Caco-2 (cell line): ENCODE measurements at regions of chr6 and their contacts with region 1.

Region 1: GRCh38 chr6:122609856-122610689 is at the start of gene PKIB:
- DNase-seq: peak; percentile 84 to 89
- H3K4me3 ChIP-seq: peak within 1 kb of the TSS; percentile 74
- H3K4me3 Mint-ChIP-seq: peak within 1 kb of the TSS; percentile 94
- H3K27ac Mint-ChIP-seq: peak within 1 kb of the TSS; percentile 87
- H3K4me1 ChIP-seq: peaks cover 6% of the 10 kb centered on the region; the same call in 1 of the 2 replicates
- H3K4me1 Mint-ChIP-seq: peaks cover 7% of the 10 kb centered on the region
- H3K27me3 ChIP-seq: no peaks in the 10 kb centered on the region
- H3K27me3 Mint-ChIP-seq: no peaks in the 10 kb centered on the region
- CTCF ChIP-seq: peak; percentile 4 to 60
- total RNA-seq, gene PKIB: 18.6 and 18.8 TPM in 2 replicates

Region 2: GRCh38 chr6:122620879-122621278 is 10.8 kb after region 1 on chr6:
- CTCF ChIA-PET with region 1: no interaction called
- POLR2A ChIA-PET with region 1: no interaction called
- intact Hi-C with region 1: loop called (anchors 1 kb)
- DNase-seq: no peak
- H3K4me3 ChIP-seq: no peak overlapping the region
- H3K4me3 Mint-ChIP-seq: no peak overlapping the region
- H3K27ac Mint-ChIP-seq: no peak overlapping the region
- H3K4me1 ChIP-seq: 0 out of 2 replicates have a peak, but pooled peaks cover 7% of the 10 kb centered on the region
- H3K4me1 Mint-ChIP-seq: peaks cover 6% of the 10 kb centered on the region
- H3K27me3 ChIP-seq: no peaks in the 10 kb centered on the region
- H3K27me3 Mint-ChIP-seq: peaks cover 3% of the 10 kb centered on the region
- CTCF ChIP-seq: no peak

Region 3: DNA sequence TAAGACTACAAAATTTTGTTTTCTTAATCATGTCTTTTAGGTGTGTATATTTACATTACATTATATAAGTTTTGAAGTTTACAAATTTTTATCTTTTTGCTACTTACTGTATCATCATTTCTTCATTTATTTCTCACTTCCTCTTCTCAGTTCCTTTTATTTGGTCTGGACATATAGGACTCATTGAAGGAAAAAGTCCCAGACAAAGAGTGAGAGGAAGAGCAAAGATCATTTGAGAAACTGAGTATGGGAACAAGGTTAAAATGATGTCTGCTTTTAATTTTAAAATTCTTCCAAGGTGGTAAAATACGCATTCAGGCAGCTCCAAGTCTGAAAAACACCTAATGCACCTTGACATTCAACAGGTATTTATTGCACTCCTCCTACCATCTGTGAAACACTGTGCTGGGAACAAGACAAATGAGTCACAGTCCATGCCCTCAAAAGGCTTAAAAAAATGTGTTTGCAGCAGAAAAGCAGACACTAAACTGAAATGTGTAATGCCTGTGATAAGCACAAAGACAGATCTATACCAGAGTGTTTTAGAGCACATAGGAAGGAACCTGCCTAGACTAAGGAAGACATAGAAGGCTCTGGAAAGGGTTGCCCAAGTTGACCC is 63.4 kb after region 1 on chr6:
- CTCF ChIA-PET with region 1: no interaction called
- POLR2A ChIA-PET with region 1: no interaction called
- intact Hi-C with region 1: loop called (anchors 2 kb)
- DNase-seq: no peak
- H3K4me3 ChIP-seq: no peak overlapping the region
- H3K4me3 Mint-ChIP-seq: no peak overlapping the region
- H3K27ac Mint-ChIP-seq: no peak overlapping the region
- H3K4me1 ChIP-seq: peaks cover 9% of the 10 kb centered on the region
- H3K4me1 Mint-ChIP-seq: peaks cover 8% of the 10 kb centered on the region
- H3K27me3 ChIP-seq: no peaks in the 10 kb centered on the region
- H3K27me3 Mint-ChIP-seq: no peaks in the 10 kb centered on the region
- CTCF ChIP-seq: no peak

Region 4: GRCh38 chr6:122730775-122731386 is 120.8 kb after region 1 on chr6:
- CTCF ChIA-PET with region 1: interaction called, 7 read pairs
- POLR2A ChIA-PET with region 1: no interaction called
- intact Hi-C with region 1: loop called (anchors 1 kb)
- DNase-seq: peak in 1 of 2 experiments; percentile 37
- H3K4me3 ChIP-seq: no peak overlapping the region
- H3K4me3 Mint-ChIP-seq: no peak overlapping the region
- H3K27ac Mint-ChIP-seq: no peak overlapping the region
- H3K4me1 ChIP-seq: peaks cover 9% of the 10 kb centered on the region; the same call in 1 of the 2 replicates
- H3K4me1 Mint-ChIP-seq: peaks cover 15% of the 10 kb centered on the region
- H3K27me3 ChIP-seq: no peaks in the 10 kb centered on the region
- H3K27me3 Mint-ChIP-seq: no peaks in the 10 kb centered on the region
- CTCF ChIP-seq: peak; percentile 59 to 62

Region 5: GRCh38 chr6:122789182-122790027 is 179.3 kb after region 1 on chr6 and contains the start of gene SMPDL3A:
- CTCF ChIA-PET with region 1: interaction called, 4 read pairs
- POLR2A ChIA-PET with region 1: no interaction called
- intact Hi-C with region 1: loop called (anchors 1 kb)
- DNase-seq: peak; percentile 78 to 84
- H3K4me3 ChIP-seq: peak within 1 kb of the TSS; percentile 73
- H3K4me3 Mint-ChIP-seq: peak within 1 kb of the TSS; percentile 96
- H3K27ac Mint-ChIP-seq: peak within 1 kb of the TSS; percentile 92
- H3K4me1 ChIP-seq: peaks cover 51% of the 10 kb centered on the region
- H3K4me1 Mint-ChIP-seq: peaks cover 30% of the 10 kb centered on the region
- H3K27me3 ChIP-seq: no peaks in the 10 kb centered on the region
- H3K27me3 Mint-ChIP-seq: no peaks in the 10 kb centered on the region
- CTCF ChIP-seq: peak; percentile 50 to 61
- total RNA-seq, gene SMPDL3A: 20.4 and 21.7 TPM in 2 replicates